Caco-2 (cell line): ENCODE measurements at regions of chr2 and their contacts with region 1.

Region 1: DNA sequence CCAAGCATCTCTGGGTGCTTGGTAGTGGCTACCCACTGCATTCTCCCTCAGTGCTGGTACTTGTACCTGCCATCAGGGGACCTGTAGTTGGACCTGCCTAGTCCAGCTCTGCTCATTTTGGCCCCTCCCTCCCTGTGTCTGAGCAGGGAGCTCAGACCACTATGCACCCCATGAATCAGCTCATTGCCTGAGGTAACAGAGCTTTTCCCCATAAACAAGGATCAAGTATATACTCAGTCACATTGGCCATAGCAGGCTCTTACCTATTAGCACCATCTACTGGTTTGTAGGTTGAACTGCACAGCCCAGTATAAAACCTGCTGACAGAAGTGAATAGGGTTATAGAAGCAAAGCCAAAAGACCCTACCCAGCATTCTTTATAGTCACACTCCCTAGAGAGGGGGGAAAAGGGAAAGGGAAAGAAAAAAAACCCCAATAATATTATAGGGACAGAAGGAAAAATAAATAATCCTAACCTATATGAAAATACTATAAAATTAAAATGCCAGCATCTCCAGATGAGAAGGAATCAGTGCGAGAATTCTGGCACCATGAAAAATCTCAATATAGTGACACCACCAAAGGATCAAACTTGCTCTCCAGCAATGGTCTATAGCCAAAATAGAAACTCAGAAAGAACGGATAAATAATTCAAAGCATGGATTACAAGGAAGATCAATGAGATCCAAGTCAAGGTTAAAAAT is 6.9 kb upstream of the FLACC1 start:
- DNase-seq: peak in 1 of 2 experiments; percentile 40
- H3K4me3 ChIP-seq: no peak overlapping the region
- H3K4me3 Mint-ChIP-seq: no peak overlapping the region
- H3K27ac Mint-ChIP-seq: no peak overlapping the region
- H3K4me1 ChIP-seq: no peaks in the 10 kb centered on the region
- H3K4me1 Mint-ChIP-seq: no peaks in the 10 kb centered on the region
- H3K27me3 ChIP-seq: no peaks in the 10 kb centered on the region
- H3K27me3 Mint-ChIP-seq: no peaks in the 10 kb centered on the region
- CTCF ChIP-seq: peak; percentile 76 to 78

Region 2: GRCh38 chr2:201208563-201209252 is 155.3 kb before region 1 on chr2:
- CTCF ChIA-PET with region 1: no interaction called
- POLR2A ChIA-PET with region 1: no interaction called
- intact Hi-C with region 1: no loop called
- DNase-seq: no peak
- H3K4me3 ChIP-seq: no peak overlapping the region
- H3K4me3 Mint-ChIP-seq: no peak overlapping the region
- H3K27ac Mint-ChIP-seq: no peak overlapping the region
- H3K4me1 ChIP-seq: no peaks in the 10 kb centered on the region
- H3K4me1 Mint-ChIP-seq: no peaks in the 10 kb centered on the region
- H3K27me3 ChIP-seq: no peaks in the 10 kb centered on the region
- H3K27me3 Mint-ChIP-seq: no peaks in the 10 kb centered on the region
- CTCF ChIP-seq: no peak

Region 3: DNA sequence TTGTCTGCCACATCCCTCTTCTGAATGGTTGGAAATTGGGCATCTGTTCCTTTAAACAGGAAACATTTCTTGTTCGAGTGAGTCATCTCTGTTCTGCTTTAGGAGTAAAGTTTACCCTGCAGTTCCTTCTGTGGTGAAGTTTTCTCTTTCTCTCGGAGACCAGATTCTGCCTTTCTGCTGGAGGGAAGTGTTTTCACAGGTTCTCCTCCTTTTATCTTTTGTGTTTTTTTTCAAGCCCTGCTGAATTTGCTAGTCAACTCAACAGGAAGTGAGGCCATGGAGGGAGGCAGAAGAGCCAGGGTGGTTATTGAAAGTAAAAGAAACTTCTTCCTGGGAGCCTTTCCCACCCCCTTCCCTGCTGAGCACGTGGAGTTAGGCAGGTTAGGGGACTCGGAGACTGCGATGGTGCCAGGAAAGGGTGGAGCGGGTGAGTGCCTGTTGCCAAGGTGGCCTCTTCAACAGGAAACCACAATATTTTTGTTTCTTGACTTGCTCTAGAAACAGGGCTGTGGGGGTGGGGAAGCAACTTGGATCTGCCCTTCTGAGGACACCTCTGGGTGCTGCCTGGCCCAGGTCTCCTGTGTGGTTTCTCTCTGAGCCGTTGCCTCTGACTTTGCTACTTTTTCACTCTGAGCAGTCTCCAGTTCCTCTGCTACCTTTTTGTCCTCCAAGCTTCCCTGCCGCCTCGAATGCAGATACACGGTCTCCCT is 105.9 kb before region 1 on chr2:
- CTCF ChIA-PET with region 1: no interaction called
- POLR2A ChIA-PET with region 1: no interaction called
- intact Hi-C with region 1: loop called (anchors 5 kb)
- DNase-seq: peak; percentile 62 to 64
- H3K4me3 ChIP-seq: peak overlapping the region; percentile 44
- H3K4me3 Mint-ChIP-seq: peak overlapping the region; percentile 88
- H3K27ac Mint-ChIP-seq: peak overlapping the region; percentile 93
- H3K4me1 ChIP-seq: peaks cover 8% of the 10 kb centered on the region
- H3K4me1 Mint-ChIP-seq: peaks cover 8% of the 10 kb centered on the region
- H3K27me3 ChIP-seq: no peaks in the 10 kb centered on the region
- H3K27me3 Mint-ChIP-seq: no peaks in the 10 kb centered on the region
- CTCF ChIP-seq: no peak

Region 4: DNA sequence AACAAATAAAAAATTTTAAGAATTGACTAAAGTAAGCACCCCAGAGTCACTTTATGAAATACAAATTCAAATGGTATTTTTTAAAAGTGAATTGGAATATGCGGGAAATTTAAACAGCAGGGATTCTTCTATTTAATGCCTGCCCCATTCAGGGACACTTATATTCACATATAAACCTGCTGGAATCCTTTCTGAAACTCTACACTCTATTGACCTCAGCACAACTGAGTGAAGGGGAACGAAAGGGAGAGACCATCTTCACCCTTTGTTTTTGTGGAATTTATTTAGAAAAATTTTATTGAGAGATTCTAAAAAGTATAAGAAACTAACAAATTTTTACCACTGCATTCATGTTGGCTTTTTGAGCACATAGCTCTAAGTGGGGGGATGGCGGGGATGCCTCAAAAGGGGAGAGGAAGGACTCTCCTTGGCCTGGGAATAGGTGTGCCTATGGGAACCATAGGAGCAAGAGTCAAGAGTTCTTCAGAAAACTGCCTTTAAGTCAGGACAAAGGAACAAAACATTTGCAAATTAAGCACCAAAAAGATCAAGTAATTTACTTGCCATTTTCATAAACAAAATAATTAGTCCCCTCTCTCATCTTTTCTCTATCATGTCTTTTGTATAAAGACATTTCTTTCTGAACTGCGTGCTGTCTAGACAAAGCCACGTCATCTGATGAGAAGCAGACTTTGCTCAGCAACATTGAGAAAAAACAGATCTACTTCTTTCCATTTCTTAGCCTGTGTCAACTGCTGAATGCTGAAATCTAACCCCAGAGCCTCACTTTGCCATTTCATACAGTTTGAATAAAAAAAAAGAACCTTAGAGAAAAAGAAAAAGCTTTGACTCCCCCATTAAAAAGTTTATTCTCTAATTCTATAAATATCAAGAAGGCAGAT is 14.7 kb after region 1 on chr2:
- CTCF ChIA-PET with region 1: no interaction called
- POLR2A ChIA-PET with region 1: no interaction called
- intact Hi-C with region 1: no loop called
- DNase-seq: no peak
- H3K4me3 ChIP-seq: no peak overlapping the region
- H3K4me3 Mint-ChIP-seq: no peak overlapping the region
- H3K27ac Mint-ChIP-seq: no peak overlapping the region
- H3K4me1 ChIP-seq: no peaks in the 10 kb centered on the region
- H3K4me1 Mint-ChIP-seq: no peaks in the 10 kb centered on the region
- H3K27me3 ChIP-seq: no peaks in the 10 kb centered on the region
- H3K27me3 Mint-ChIP-seq: no peaks in the 10 kb centered on the region
- CTCF ChIP-seq: no peak